ENCODE measurements at regions of chr10 and their contacts with region 1.

Region 1: GRCh38 chr10:31650010-31650409 is 278.6 kb downstream of the ARHGAP12 start:
- DNase-seq: peak; percentile 95
- H3K4me3 ChIP-seq: peak overlapping the region in 1 of 3 experiments; percentile 30
- H3K27ac ChIP-seq: peak overlapping the region; percentile 69
- H3K4me1 ChIP-seq: peaks cover 17% of the 10 kb centered on the region
- H3K27me3 ChIP-seq: no peaks in the 10 kb centered on the region
- CTCF ChIP-seq: no peak
- POLR2A ChIP-seq: peak; percentile 59

Region 2: GRCh38 chr10:31759799-31760626 is 110.0 kb after region 1 on chr10:
- CTCF ChIA-PET with region 1: no interaction called
- POLR2A ChIA-PET with region 1: no interaction called
- dilution Hi-C with region 1: no loop called
- intact Hi-C with region 1: loop called (anchors 1 kb)
- DNase-seq: peak; percentile 99
- H3K4me3 ChIP-seq: peak overlapping the region; percentile 57 to 77 (median 76)
- H3K27ac ChIP-seq: peak overlapping the region; percentile 94
- H3K4me1 ChIP-seq: peaks cover 11% of the 10 kb centered on the region
- H3K27me3 ChIP-seq: no peaks in the 10 kb centered on the region
- CTCF ChIP-seq: no peak
- POLR2A ChIP-seq: peak; percentile 83

Measured in endothelial cell of umbilical vein (primary cell).